K562 (cell line): ENCODE measurements at regions of chr1 and their contacts with region 1.

Region 1: GRCh38 chr1:204494281-204495077 is at the start of gene PIK3C2B:
- DNase-seq: peak; percentile 88 to 92 (median 91)
- ATAC-seq: peak; percentile 99
- H3K4me3 ChIP-seq: peak within 1 kb of the TSS; percentile 49
- H3K27ac ChIP-seq: no peak within 1 kb of the TSS
- H3K4me1 ChIP-seq: peaks cover 14 to 15% of the 10 kb centered on the region in 2 experiments; a peak in 4 of 5 replicates
- H3K27me3 ChIP-seq: peaks cover 29 to 39% of the 10 kb centered on the region in 2 experiments
- CTCF ChIP-seq: peak; percentile 59 to 85 (median 66); a peak in 5 of 6 replicates
- EP300 ChIP-seq: no peak
- POLR2A ChIP-seq: no peak
- RAD21 ChIP-seq: peak; percentile 79 to 81
- polyA plus RNA-seq, gene PIK3C2B: 0.10 to 0.27 TPM

Region 2: GRCh38 chr1:203239526-203240305 is 1254.8 kb before region 1 on chr1:
- CTCF ChIA-PET with region 1: no interaction called
- POLR2A ChIA-PET with region 1: no interaction called
- in situ Hi-C with region 1: no loop called
- intact Hi-C with region 1: no loop called
- DNase-seq: no peak
- ATAC-seq: no peak
- H3K4me3 ChIP-seq: no peak overlapping the region
- H3K27ac ChIP-seq: no peak overlapping the region
- H3K4me1 ChIP-seq: no peaks in the 10 kb centered on the region
- H3K27me3 ChIP-seq: no peaks in the 10 kb centered on the region
- CTCF ChIP-seq: no peak
- EP300 ChIP-seq: no peak
- POLR2A ChIP-seq: no peak
- RAD21 ChIP-seq: no peak

Region 3: GRCh38 chr1:204446370-204447111 is 47.9 kb before region 1 on chr1:
- CTCF ChIA-PET with region 1: interaction called, 13 read pairs
- POLR2A ChIA-PET with region 1: interaction called, 5 read pairs
- in situ Hi-C with region 1: no loop called
- intact Hi-C with region 1: loop called (anchors 2 kb)
- DNase-seq: peak; percentile 70 to 79 (median 74)
- ATAC-seq: peak; percentile 82
- H3K4me3 ChIP-seq: no peak overlapping the region
- H3K27ac ChIP-seq: no peak overlapping the region
- H3K4me1 ChIP-seq: peaks cover 0 to 4% of the 10 kb centered on the region in 2 experiments; a peak in 1 of 5 replicates
- H3K27me3 ChIP-seq: peaks cover 12 to 59% of the 10 kb centered on the region in 2 experiments; a peak in 4 of 5 replicates
- CTCF ChIP-seq: peak in 2 of 3 experiments; percentile 72 to 83; a peak in 4 of 6 replicates
- EP300 ChIP-seq: no peak
- POLR2A ChIP-seq: no peak
- RAD21 ChIP-seq: peak; percentile 86 to 91

Region 4: GRCh38 chr1:204477036-204477740 is 17.3 kb before region 1 on chr1:
- CTCF ChIA-PET with region 1: no interaction called
- POLR2A ChIA-PET with region 1: interaction called, 10 read pairs
- in situ Hi-C with region 1: no loop called
- intact Hi-C with region 1: no loop called
- DNase-seq: no peak
- ATAC-seq: no peak
- H3K4me3 ChIP-seq: no peak overlapping the region
- H3K27ac ChIP-seq: no peak overlapping the region
- H3K4me1 ChIP-seq: peaks cover 4 to 5% of the 10 kb centered on the region in 2 experiments; a peak in 1 of 5 replicates
- H3K27me3 ChIP-seq: peaks cover 51 to 60% of the 10 kb centered on the region in 2 experiments
- CTCF ChIP-seq: no peak
- EP300 ChIP-seq: no peak
- POLR2A ChIP-seq: no peak
- RAD21 ChIP-seq: no peak

Region 5: GRCh38 chr1:204647114-204647804 is 152.8 kb after region 1 on chr1:
- CTCF ChIA-PET with region 1: no interaction called
- POLR2A ChIA-PET with region 1: no interaction called
- in situ Hi-C with region 1: no loop called
- intact Hi-C with region 1: no loop called
- DNase-seq: peak; percentile 92 to 93 (median 92)
- ATAC-seq: peak; percentile 99
- H3K4me3 ChIP-seq: no peak overlapping the region
- H3K27ac ChIP-seq: peak overlapping the region; percentile 17; the same call in 2 of the 3 replicates
- H3K4me1 ChIP-seq: peaks cover 3 to 5% of the 10 kb centered on the region in 2 experiments; a peak in 3 of 5 replicates
- H3K27me3 ChIP-seq: peaks cover 21 to 42% of the 10 kb centered on the region in 2 experiments; a peak in 4 of 5 replicates
- CTCF ChIP-seq: no peak
- EP300 ChIP-seq: peak; percentile 78
- POLR2A ChIP-seq: no peak
- RAD21 ChIP-seq: peak in 1 of 2 experiments; percentile 33; a peak in 2 of 4 replicates